OCI-LY7 (cell line): ENCODE measurements at regions of chr17 and their contacts with region 1.

Region 1: DNA sequence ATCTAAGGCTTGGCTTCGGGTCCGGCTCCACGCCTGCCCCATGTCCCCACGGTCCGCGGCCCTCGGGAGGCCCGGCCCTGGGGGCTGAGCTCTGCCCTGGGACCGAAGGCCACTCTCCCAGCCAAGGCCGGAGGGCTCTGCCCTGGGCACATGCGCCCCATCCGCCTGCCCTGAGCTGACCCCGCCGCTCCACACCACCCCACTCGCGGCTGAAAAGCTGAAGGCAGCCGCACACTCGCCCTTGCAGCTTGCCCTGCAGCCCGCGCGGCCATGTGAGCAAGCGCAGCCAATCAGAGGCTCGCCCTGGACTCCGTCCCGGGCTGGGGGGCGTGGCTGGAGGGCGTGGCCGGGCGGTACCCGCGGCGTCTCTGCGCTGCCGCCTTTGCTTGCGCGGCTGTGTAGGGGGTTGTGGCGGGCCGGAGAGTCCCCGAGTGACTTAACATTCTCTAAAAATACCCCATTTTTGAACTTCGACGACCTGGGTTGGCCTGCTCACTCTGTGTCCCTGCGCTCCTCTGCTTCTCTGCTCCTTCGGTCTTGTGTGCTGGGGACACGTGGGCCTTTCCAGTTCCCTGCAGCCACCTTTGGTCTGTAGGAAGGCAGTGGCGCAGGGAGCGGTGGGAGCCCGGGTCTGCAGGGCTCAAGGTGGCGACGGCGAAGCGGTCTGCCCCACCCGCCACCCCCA is 8.8 kb upstream of the MAP2K3 start:
- DNase-seq: peak; percentile 94
- H3K4me3 ChIP-seq: peak overlapping the region; percentile 71
- H3K27ac ChIP-seq: no peak overlapping the region
- H3K4me1 ChIP-seq: peaks cover 61% of the 10 kb centered on the region
- CTCF ChIP-seq: 0 out of 2 replicates have a peak, but pooled peaks have one; percentile 24

Region 2: GRCh38 chr17:21330436-21331160 is 54.9 kb after region 1 on chr17:
- CTCF ChIA-PET with region 1: no interaction called
- POLR2A ChIA-PET with region 1: no interaction called
- intact Hi-C with region 1: no loop called
- DNase-seq: no peak
- H3K4me3 ChIP-seq: no peak overlapping the region
- H3K27ac ChIP-seq: no peak overlapping the region
- H3K4me1 ChIP-seq: peaks cover 22% of the 10 kb centered on the region
- CTCF ChIP-seq: no peak

Region 3: GRCh38 chr17:21358707-21359482 is 83.2 kb after region 1 on chr17:
- CTCF ChIA-PET with region 1: no interaction called
- POLR2A ChIA-PET with region 1: no interaction called
- intact Hi-C with region 1: no loop called
- DNase-seq: no peak
- H3K4me3 ChIP-seq: no peak overlapping the region
- H3K27ac ChIP-seq: no peak overlapping the region
- H3K4me1 ChIP-seq: no peaks in the 10 kb centered on the region
- CTCF ChIP-seq: no peak

Region 4: GRCh38 chr17:21376759-21377690 is 101.3 kb after region 1 on chr17:
- CTCF ChIA-PET with region 1: interaction called, 4 read pairs
- POLR2A ChIA-PET with region 1: no interaction called
- intact Hi-C with region 1: loop called (anchors 1 kb)
- DNase-seq: no peak
- H3K4me3 ChIP-seq: peak overlapping the region; percentile 48
- H3K27ac ChIP-seq: no peak overlapping the region
- H3K4me1 ChIP-seq: peaks cover 4% of the 10 kb centered on the region
- CTCF ChIP-seq: no peak

Region 5: DNA sequence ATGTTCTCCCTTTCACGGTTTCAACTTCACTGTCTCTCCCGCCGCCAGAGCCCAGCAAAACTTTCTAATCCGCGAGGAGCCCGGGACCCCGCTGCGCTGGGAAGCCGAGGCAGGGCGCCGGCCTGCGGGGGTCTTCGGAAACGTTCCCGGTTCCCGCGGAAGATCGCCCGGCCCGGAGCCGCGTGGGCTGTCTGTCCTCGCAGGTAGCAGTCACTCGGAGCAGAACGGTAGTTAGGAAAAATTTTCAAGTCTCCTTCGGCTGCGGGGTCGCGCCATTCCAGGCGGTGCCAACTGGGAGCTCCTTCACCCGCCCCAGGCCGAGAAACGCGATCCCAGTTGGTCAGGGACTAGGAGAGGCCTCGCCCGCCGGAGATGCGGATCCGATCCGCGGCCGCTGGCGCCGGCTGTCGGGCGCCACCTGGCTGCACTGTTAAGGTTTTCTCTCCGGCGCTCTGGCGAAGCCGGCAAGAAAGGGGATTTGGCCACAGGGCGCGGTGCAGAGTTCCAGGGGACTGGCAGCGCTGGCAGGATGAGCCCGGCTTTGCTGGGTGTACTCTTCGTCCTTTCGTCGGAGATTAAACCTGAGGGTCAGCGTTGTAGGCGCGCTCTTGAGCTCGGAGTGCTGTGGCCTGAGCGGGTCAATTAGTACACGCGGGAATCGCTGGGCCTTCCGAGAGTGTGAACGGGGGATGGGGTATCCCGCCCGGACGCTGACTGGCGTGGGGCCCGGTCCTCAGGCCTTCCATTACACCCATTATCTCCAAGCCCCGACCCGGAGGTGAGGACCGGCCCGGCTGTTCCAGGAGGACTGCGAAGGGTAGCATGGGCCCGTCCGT is 235.9 kb after region 1 on chr17:
- CTCF ChIA-PET with region 1: no interaction called
- POLR2A ChIA-PET with region 1: no interaction called
- intact Hi-C with region 1: loop called (anchors 1 kb)
- DNase-seq: peak; percentile 50
- H3K4me3 ChIP-seq: no peak overlapping the region
- H3K27ac ChIP-seq: no peak overlapping the region
- H3K4me1 ChIP-seq: peaks cover 3% of the 10 kb centered on the region
- CTCF ChIP-seq: peak; percentile 73